ENCODE measurements at regions of chr16 and their contacts with region 1.

Region 1: GRCh38 chr16:88650749-88651275 is at the start of gene CYBA:
- H3K4me3 Mint-ChIP-seq: peak within 1 kb of the TSS; percentile 94
- H3K27ac Mint-ChIP-seq: peak within 1 kb of the TSS; percentile 92
- H3K4me1 Mint-ChIP-seq: peaks cover 57% of the 10 kb centered on the region
- H3K27me3 Mint-ChIP-seq: no peaks in the 10 kb centered on the region

Region 2: DNA sequence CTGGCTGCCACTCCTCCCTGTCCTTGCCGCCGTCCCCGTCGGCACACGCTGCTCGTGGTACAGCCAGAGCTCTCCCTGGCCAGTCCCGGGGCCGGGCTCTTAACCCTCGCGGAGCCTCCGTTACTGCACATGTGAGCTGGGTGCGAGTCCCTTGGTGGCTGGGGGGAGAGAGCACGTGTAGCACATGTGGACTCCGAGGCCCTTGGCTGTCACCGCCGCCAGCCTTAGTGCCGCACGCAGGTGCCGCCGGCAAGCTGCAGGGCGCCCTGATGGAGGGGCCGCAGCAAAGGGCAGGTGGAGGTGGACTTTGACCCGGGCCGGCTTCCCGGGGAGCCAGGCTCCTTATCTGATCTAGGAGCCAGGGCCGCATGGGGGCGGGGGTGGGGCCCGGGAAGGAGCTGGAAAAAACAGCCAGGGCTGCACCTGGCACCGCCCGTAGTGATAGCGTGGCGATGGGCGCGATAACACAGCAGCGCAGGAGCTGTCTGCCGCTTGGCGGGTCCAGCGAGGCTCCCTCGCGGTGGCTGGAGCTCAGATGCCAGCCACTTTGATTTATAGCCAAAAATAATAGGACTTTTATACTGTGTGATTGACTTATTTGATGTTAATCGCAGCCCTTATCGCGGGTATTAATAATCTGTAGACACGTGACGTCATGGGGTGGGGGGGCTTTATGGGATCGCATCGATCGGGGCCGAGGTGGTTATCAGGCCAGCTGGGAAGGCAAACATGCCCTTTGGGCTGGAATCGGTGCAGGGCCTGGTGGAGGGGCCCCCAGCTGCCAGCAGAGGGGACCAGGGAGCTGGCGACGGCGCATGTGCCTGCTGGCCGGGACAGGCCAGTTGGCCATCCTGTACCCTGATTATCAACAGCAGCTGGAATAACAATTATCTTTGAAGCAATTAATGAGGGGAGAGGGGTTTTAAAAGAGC is 162.6 kb before region 1 on chr16:
- intact Hi-C with region 1: no loop called
- H3K4me3 Mint-ChIP-seq: no peak overlapping the region
- H3K27ac Mint-ChIP-seq: no peak overlapping the region
- H3K4me1 Mint-ChIP-seq: no peaks in the 10 kb centered on the region
- H3K27me3 Mint-ChIP-seq: peaks cover 1% of the 10 kb centered on the region

Region 3: GRCh38 chr16:88662843-88663606 is 12.2 kb after region 1 on chr16 and contains the start of gene MVD:
- intact Hi-C with region 1: loop called (anchors 1 kb)
- H3K4me3 Mint-ChIP-seq: peak within 1 kb of the TSS; percentile 94
- H3K27ac Mint-ChIP-seq: peak within 1 kb of the TSS; percentile 94
- H3K4me1 Mint-ChIP-seq: peaks cover 35% of the 10 kb centered on the region
- H3K27me3 Mint-ChIP-seq: peaks cover 2% of the 10 kb centered on the region

Region 4: GRCh38 chr16:88686439-88687253 is 35.8 kb after region 1 on chr16 and contains the start of gene SNAI3:
- intact Hi-C with region 1: loop called (anchors 5 kb)
- H3K4me3 Mint-ChIP-seq: peak within 1 kb of the TSS; percentile 86
- H3K27ac Mint-ChIP-seq: peak within 1 kb of the TSS; percentile 98
- H3K4me1 Mint-ChIP-seq: peaks cover 82% of the 10 kb centered on the region
- H3K27me3 Mint-ChIP-seq: peaks cover 7% of the 10 kb centered on the region

Region 5: GRCh38 chr16:88706288-88706964 is 55.6 kb after region 1 on chr16 and contains the starts of genes CTU2 and RNF166:
- intact Hi-C with region 1: loop called (anchors 2 kb)
- H3K4me3 Mint-ChIP-seq: peak within 1 kb of the TSS; percentile 93
- H3K27ac Mint-ChIP-seq: peak within 1 kb of the TSS; percentile 89
- H3K4me1 Mint-ChIP-seq: peaks cover 65% of the 10 kb centered on the region
- H3K27me3 Mint-ChIP-seq: no peaks in the 10 kb centered on the region